ENCODE measurements at regions of chr6 and their contacts with region 1.

Region 1: DNA sequence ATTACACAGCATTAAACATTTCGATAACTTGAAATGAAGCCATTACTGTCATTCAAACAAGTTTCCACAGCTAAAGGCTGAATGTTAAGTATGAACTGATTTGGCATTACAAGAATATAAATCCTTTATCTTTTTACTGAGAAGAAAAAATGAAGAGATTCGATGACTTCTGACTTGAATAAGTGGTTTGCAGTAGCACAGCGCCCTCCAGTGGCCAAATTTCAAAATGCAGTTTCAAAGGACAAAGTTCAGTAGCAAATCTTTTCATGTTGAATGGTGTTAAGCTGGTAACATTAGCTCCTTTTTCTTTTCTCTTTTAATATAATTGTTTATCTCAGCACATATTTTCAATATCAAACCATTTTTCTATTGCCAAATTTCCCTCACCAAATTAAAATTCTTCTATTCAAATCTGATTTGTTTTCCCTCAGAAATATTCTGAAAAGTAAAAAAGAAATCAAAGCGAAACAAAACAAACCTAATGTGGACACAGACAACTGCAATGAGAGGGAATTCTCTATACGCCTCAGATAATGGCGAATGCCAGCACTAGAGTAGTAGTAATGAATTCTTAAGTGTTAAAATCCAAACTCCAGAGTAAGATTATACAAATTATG is 145.7 kb downstream of the BTBD9 start:
- DNase-seq: peak; percentile 56 to 71
- H3K4me3 ChIP-seq: no peak overlapping the region
- H3K27ac ChIP-seq: no peak overlapping the region
- H3K4me1 ChIP-seq: no peaks in the 10 kb centered on the region
- H3K27me3 ChIP-seq: no peaks in the 10 kb centered on the region
- CTCF ChIP-seq: peak; percentile 97

Region 2: GRCh38 chr6:37381579-37381978 is 1112.5 kb before region 1 on chr6:
- CTCF ChIA-PET with region 1: no interaction called
- POLR2A ChIA-PET with region 1: no interaction called
- intact Hi-C with region 1: loop called (anchors 1 kb)
- DNase-seq: peak; percentile 48 to 84
- H3K4me3 ChIP-seq: no peak overlapping the region
- H3K27ac ChIP-seq: no peak overlapping the region
- H3K4me1 ChIP-seq: no peaks in the 10 kb centered on the region
- H3K27me3 ChIP-seq: no peaks in the 10 kb centered on the region
- CTCF ChIP-seq: peak; percentile 80

Region 3: DNA sequence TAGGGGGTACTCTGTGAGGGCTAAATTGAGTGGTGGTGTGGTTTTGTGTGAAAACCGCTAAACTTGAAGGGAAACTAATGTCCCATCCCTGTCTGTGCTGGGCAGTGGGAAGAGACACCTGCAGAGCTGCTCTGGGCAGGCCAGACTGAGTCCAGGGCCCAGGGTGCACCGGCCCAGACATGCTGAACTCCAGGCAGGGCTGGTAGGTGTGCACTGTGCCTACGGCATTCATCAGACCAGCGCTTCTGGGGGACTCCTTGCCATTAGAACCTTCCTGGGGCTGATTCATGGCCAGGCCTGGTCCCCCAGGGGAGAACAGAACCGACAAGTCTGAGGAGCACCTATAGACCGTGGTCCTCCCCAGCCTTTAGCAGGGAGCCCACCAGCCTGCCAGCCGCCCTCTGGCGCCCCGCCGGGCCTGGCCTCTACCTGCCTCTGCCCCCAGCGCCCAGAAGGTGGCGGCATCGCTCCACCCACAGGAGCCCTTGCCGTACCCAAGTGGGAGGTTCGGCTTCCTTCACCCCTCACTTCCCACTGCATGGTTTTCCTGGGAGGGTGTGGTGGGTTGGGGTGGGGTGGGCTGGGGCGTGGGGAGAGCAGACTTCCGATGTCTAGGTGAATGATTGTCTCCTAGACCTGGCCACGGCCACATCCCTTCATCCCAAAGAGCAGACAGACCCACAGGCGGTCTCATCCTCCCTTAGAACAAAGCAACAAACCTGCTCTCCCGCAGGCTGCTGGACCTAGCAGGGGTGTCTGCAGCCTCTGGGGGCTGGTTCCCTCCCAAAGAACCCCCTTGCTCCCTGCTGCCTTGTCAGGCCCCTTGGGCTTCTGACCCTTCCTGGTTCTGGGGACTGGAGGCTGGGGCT is 1009.9 kb before region 1 on chr6:
- CTCF ChIA-PET with region 1: no interaction called
- POLR2A ChIA-PET with region 1: no interaction called
- intact Hi-C with region 1: loop called (anchors 5 kb)
- DNase-seq: peak in 1 of 2 experiments; percentile 65
- H3K4me3 ChIP-seq: no peak overlapping the region
- H3K27ac ChIP-seq: no peak overlapping the region
- H3K4me1 ChIP-seq: no peaks in the 10 kb centered on the region
- H3K27me3 ChIP-seq: no peaks in the 10 kb centered on the region
- CTCF ChIP-seq: peak; percentile 82

Region 4: GRCh38 chr6:37791156-37791919 is 702.7 kb before region 1 on chr6:
- CTCF ChIA-PET with region 1: no interaction called
- POLR2A ChIA-PET with region 1: no interaction called
- intact Hi-C with region 1: loop called (anchors 10 kb)
- DNase-seq: peak; percentile 93
- H3K4me3 ChIP-seq: no peak overlapping the region
- H3K27ac ChIP-seq: no peak overlapping the region
- H3K4me1 ChIP-seq: peaks cover 16% of the 10 kb centered on the region
- H3K27me3 ChIP-seq: no peaks in the 10 kb centered on the region
- CTCF ChIP-seq: peak; percentile 95

Region 5: GRCh38 chr6:38671885-38672467 is 177.9 kb after region 1 on chr6:
- CTCF ChIA-PET with region 1: no interaction called
- POLR2A ChIA-PET with region 1: no interaction called
- intact Hi-C with region 1: loop called (anchors 2 kb)
- DNase-seq: peak; percentile 17 to 42
- H3K4me3 ChIP-seq: no peak overlapping the region
- H3K27ac ChIP-seq: no peak overlapping the region
- H3K4me1 ChIP-seq: no peaks in the 10 kb centered on the region
- H3K27me3 ChIP-seq: no peaks in the 10 kb centered on the region
- CTCF ChIP-seq: peak; percentile 78

Measured in PC-9 (cell line).